Activated CD8-positive, alpha-beta T cell treated with anti-CD3 and anti-CD28 coated beads for 36 hours (primary cell): ENCODE measurements at regions of chr1 and their contacts with region 1.

Region 1: GRCh38 chr1:86499987-86500593 is 31.4 kb downstream of the CLCA1 start:
- DNase-seq: no peak
- ATAC-seq: peak; percentile 48
- H3K4me3 Mint-ChIP-seq: no peak overlapping the region
- H3K27ac Mint-ChIP-seq: no peak overlapping the region
- H3K4me1 Mint-ChIP-seq: peaks cover 8% of the 10 kb centered on the region
- H3K27me3 Mint-ChIP-seq: no peaks in the 10 kb centered on the region
- CTCF ChIP-seq: peak; percentile 100

Region 2: DNA sequence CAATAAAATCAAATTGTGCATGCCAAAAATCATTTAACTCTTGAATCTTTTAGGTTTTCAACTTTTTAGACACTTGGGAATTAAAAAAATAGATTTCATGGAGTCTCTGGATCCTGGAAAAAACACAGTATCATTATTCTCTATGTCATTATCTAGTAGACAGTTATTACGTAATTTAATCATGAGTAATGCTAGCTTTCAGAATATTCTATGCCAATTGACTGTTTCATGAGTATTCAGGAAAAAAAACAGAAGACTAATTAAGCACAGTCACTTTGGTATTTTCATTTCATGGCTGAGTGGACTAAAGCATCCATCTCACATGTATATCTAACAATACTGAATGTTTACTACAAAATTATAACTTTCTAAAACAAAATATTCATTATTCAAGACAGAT is 148.0 kb before region 1 on chr1:
- CTCF ChIA-PET with region 1: no interaction called
- POLR2A ChIA-PET with region 1: no interaction called
- intact Hi-C with region 1: no loop called
- DNase-seq: no peak
- ATAC-seq: no peak
- H3K4me3 Mint-ChIP-seq: no peak overlapping the region
- H3K27ac Mint-ChIP-seq: no peak overlapping the region
- H3K4me1 Mint-ChIP-seq: no peaks in the 10 kb centered on the region
- H3K27me3 Mint-ChIP-seq: no peaks in the 10 kb centered on the region
- CTCF ChIP-seq: no peak

Region 3: GRCh38 chr1:86370601-86371022 is 129.5 kb before region 1 on chr1:
- CTCF ChIA-PET with region 1: interaction called, 10 read pairs
- POLR2A ChIA-PET with region 1: no interaction called
- intact Hi-C with region 1: no loop called
- DNase-seq: no peak
- ATAC-seq: no peak
- H3K4me3 Mint-ChIP-seq: no peak overlapping the region
- H3K27ac Mint-ChIP-seq: no peak overlapping the region
- H3K4me1 Mint-ChIP-seq: peaks cover 11% of the 10 kb centered on the region
- H3K27me3 Mint-ChIP-seq: no peaks in the 10 kb centered on the region
- CTCF ChIP-seq: no peak

Region 4: DNA sequence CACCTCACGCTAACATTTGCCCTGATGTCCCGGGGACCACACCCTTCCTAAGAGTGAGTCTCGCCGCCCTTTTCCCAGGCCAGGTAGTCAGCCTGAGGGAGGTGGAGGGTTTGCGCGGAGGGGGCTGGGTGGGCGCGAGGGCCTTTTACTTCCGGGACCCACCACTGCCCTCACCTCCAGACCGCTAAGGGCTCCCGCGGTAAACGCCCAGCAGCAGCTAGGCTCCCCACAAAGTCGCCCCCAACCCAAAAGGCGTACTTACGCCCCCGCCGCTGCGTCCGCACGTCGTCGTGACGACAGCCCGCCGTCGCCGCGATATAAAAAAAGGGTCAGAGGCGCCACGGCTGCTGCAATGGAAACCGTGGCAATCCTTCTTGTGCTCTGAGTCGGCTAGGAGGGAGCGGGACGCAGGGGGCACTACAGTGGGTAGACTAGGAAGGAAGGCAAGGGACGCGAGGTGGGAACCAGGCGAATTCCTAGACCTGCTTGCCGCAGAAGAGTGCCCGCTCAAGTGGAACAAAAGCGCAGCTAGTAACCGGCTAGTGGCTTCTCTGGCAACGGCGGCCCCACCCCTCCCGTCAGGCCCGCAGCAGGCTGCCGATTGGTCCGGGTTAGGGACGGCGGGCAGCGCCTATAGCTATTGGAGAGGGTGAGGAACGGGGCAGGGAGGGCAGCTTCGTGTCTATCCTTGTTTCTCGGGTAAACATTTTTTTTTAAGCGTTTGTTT is 104.2 kb before region 1 on chr1 and contains the start of gene ODF2L:
- CTCF ChIA-PET with region 1: interaction called, 29 read pairs
- POLR2A ChIA-PET with region 1: interaction called, 5 read pairs
- intact Hi-C with region 1: no loop called
- DNase-seq: peak; percentile 93
- ATAC-seq: peak; percentile 100
- H3K4me3 Mint-ChIP-seq: peak within 1 kb of the TSS; percentile 95
- H3K27ac Mint-ChIP-seq: peak within 1 kb of the TSS; percentile 93
- H3K4me1 Mint-ChIP-seq: peaks cover 49% of the 10 kb centered on the region
- H3K27me3 Mint-ChIP-seq: no peaks in the 10 kb centered on the region
- CTCF ChIP-seq: no peak
- total RNA-seq, gene ODF2L: 21.7 to 23.8 TPM

Region 5: DNA sequence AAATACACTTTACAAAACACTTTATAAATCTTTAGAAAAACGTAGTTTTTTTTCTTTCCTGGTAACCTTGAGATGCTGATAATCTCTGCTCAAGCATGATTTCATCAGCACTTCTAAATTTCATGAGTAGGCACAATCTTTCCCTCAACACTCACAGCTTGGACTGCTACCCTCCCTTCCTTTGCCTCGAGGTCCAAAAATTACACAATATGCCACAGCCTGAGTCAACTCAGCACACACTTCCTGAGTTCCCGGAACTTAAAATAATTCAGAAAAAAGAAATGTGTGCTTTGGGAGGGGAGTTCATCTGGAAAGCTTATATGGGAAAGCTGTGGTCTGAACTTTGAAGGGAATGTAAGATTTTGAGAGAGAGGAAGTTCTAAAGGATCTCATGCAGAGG is 70.3 kb before region 1 on chr1:
- CTCF ChIA-PET with region 1: interaction called, 79 read pairs
- POLR2A ChIA-PET with region 1: no interaction called
- intact Hi-C with region 1: no loop called
- DNase-seq: peak; percentile 8
- ATAC-seq: peak; percentile 77
- H3K4me3 Mint-ChIP-seq: no peak overlapping the region
- H3K27ac Mint-ChIP-seq: no peak overlapping the region
- H3K4me1 Mint-ChIP-seq: no peaks in the 10 kb centered on the region
- H3K27me3 Mint-ChIP-seq: peaks cover 6% of the 10 kb centered on the region
- CTCF ChIP-seq: no peak

Region 6: DNA sequence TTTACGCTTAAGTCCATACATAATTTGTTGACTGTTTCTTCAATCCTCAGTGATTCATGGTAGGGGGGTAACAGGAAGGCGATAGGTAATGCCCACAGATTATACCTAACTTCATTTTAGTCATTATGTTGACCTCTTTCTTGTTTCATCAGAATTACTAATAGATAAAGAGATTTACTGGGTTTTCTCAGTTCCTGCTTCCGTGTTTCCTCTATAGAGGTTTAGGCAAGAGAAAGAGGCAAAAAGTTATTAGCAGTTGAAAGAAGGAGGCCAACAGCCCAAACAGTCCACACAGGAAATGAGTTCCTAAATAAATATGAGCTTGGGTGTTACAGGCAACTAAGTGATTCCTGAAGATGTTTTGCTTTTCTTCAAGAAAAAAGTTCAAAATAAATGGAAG is 49.2 kb before region 1 on chr1:
- CTCF ChIA-PET with region 1: interaction called, 10 read pairs
- POLR2A ChIA-PET with region 1: no interaction called
- intact Hi-C with region 1: no loop called
- DNase-seq: no peak
- ATAC-seq: no peak
- H3K4me3 Mint-ChIP-seq: no peak overlapping the region
- H3K27ac Mint-ChIP-seq: no peak overlapping the region
- H3K4me1 Mint-ChIP-seq: no peaks in the 10 kb centered on the region
- H3K27me3 Mint-ChIP-seq: no peaks in the 10 kb centered on the region
- CTCF ChIP-seq: no peak

Region 7: GRCh38 chr1:86487131-86487810 is 12.8 kb before region 1 on chr1:
- CTCF ChIA-PET with region 1: interaction called, 88 read pairs
- POLR2A ChIA-PET with region 1: no interaction called
- intact Hi-C with region 1: no loop called
- DNase-seq: no peak
- ATAC-seq: no peak
- H3K4me3 Mint-ChIP-seq: no peak overlapping the region
- H3K27ac Mint-ChIP-seq: no peak overlapping the region
- H3K4me1 Mint-ChIP-seq: no peaks in the 10 kb centered on the region
- H3K27me3 Mint-ChIP-seq: no peaks in the 10 kb centered on the region
- CTCF ChIP-seq: no peak

Region 8: DNA sequence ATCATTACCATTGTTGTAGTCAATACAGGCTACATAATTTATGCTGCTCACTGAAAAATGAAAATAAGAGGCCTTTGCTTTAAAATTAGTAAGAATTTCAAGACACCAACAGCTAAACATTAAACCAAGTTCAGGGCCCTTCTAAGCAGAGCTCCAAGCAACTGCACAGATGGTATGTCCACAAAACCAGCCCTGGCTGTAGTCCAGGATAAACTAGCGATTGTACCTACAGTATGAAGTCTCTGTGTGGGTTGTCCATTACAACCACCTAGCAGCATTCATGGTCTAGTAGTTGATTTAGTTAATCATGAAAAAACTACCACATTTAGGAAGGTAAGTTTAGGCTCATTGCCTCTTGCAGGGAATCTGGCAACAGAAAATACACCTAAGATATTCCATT is 82.1 kb after region 1 on chr1:
- CTCF ChIA-PET with region 1: no interaction called
- POLR2A ChIA-PET with region 1: no interaction called
- intact Hi-C with region 1: no loop called
- DNase-seq: no peak
- ATAC-seq: no peak
- H3K4me3 Mint-ChIP-seq: no peak overlapping the region
- H3K27ac Mint-ChIP-seq: no peak overlapping the region
- H3K4me1 Mint-ChIP-seq: no peaks in the 10 kb centered on the region
- H3K27me3 Mint-ChIP-seq: no peaks in the 10 kb centered on the region
- CTCF ChIP-seq: no peak

Region 9: GRCh38 chr1:86704458-86704971 is 204.4 kb after region 1 on chr1 and contains the start of gene SH3GLB1:
- CTCF ChIA-PET with region 1: interaction called, 30 read pairs
- POLR2A ChIA-PET with region 1: interaction called, 4 read pairs
- intact Hi-C with region 1: loop called (anchors 10 kb)
- DNase-seq: peak; percentile 91
- ATAC-seq: peak; percentile 89
- H3K4me3 Mint-ChIP-seq: peak within 1 kb of the TSS; percentile 94
- H3K27ac Mint-ChIP-seq: peak within 1 kb of the TSS; percentile 98
- H3K4me1 Mint-ChIP-seq: peaks cover 37% of the 10 kb centered on the region
- H3K27me3 Mint-ChIP-seq: no peaks in the 10 kb centered on the region
- CTCF ChIP-seq: peak; percentile 90
- total RNA-seq, gene SH3GLB1: 46.1 to 47.3 TPM